ENCODE measurements at regions of chr19 and their contacts with region 1.

Region 1: GRCh38 chr19:43934985-43935708 is at the start of gene ZNF45:
- DNase-seq: peak; percentile 75 to 94 (median 82)
- ATAC-seq: peak; percentile 95
- H3K4me3 ChIP-seq: peak within 1 kb of the TSS; percentile 78
- H3K4me3 Mint-ChIP-seq: peak within 1 kb of the TSS; percentile 96
- H3K27ac ChIP-seq: peak within 1 kb of the TSS; percentile 56 to 64
- H3K27ac Mint-ChIP-seq: peak within 1 kb of the TSS; percentile 86
- H3K4me1 ChIP-seq: peaks cover 10% of the 10 kb centered on the region
- H3K4me1 Mint-ChIP-seq: peaks cover 25% of the 10 kb centered on the region
- H3K27me3 ChIP-seq: no peaks in the 10 kb centered on the region
- H3K27me3 Mint-ChIP-seq: no peaks in the 10 kb centered on the region
- CTCF ChIP-seq: no peak
- total RNA-seq, gene ZNF45: 4.0 to 4.6 TPM

Region 2: GRCh38 chr19:43754503-43755255 is 180.5 kb before region 1 on chr19 and contains the start of gene SMG9:
- CTCF ChIA-PET with region 1: no interaction called
- POLR2A ChIA-PET with region 1: no interaction called
- intact Hi-C with region 1: loop called in 1 of 2 experiments (anchors 5 kb)
- DNase-seq: peak; percentile 96 to 100 (median 98)
- ATAC-seq: peak; percentile 79
- H3K4me3 ChIP-seq: peak within 1 kb of the TSS; percentile 95
- H3K4me3 Mint-ChIP-seq: peak within 1 kb of the TSS; percentile 98
- H3K27ac ChIP-seq: peak within 1 kb of the TSS; percentile 97 to 99
- H3K27ac Mint-ChIP-seq: peak within 1 kb of the TSS; percentile 95
- H3K4me1 ChIP-seq: peaks cover 42% of the 10 kb centered on the region
- H3K4me1 Mint-ChIP-seq: peaks cover 43% of the 10 kb centered on the region
- H3K27me3 ChIP-seq: no peaks in the 10 kb centered on the region
- H3K27me3 Mint-ChIP-seq: no peaks in the 10 kb centered on the region
- CTCF ChIP-seq: no peak
- total RNA-seq, gene SMG9: 34.7 to 38.2 TPM

Region 3: GRCh38 chr19:43950834-43951645 is 15.9 kb after region 1 on chr19 and contains the start of gene ZNF221:
- CTCF ChIA-PET with region 1: no interaction called
- POLR2A ChIA-PET with region 1: interaction called, 12 read pairs
- intact Hi-C with region 1: loop called in 1 of 2 experiments (anchors 2 kb)
- DNase-seq: peak; percentile 9 to 86 (median 31)
- ATAC-seq: peak; percentile 51
- H3K4me3 ChIP-seq: peak within 1 kb of the TSS; percentile 84
- H3K4me3 Mint-ChIP-seq: peak within 1 kb of the TSS; percentile 95
- H3K27ac ChIP-seq: no peak within 1 kb of the TSS
- H3K27ac Mint-ChIP-seq: peak within 1 kb of the TSS; percentile 36
- H3K4me1 ChIP-seq: peaks cover 7% of the 10 kb centered on the region
- H3K4me1 Mint-ChIP-seq: peaks cover 15% of the 10 kb centered on the region
- H3K27me3 ChIP-seq: peaks cover 0 to 6% of the 10 kb centered on the region in 2 experiments
- H3K27me3 Mint-ChIP-seq: peaks cover 28% of the 10 kb centered on the region
- CTCF ChIP-seq: no peak
- total RNA-seq, gene ZNF221: 0.34 to 0.41 TPM

Region 4: GRCh38 chr19:44002566-44003460 is 67.7 kb after region 1 on chr19 and contains the start of gene ZNF230:
- CTCF ChIA-PET with region 1: no interaction called
- POLR2A ChIA-PET with region 1: interaction called, 8 read pairs
- intact Hi-C with region 1: loop called (anchors 5 to 10 kb)
- DNase-seq: peak; percentile 56 to 96 (median 75)
- ATAC-seq: peak; percentile 97
- H3K4me3 ChIP-seq: peak within 1 kb of the TSS; percentile 84
- H3K4me3 Mint-ChIP-seq: peak within 1 kb of the TSS; percentile 100
- H3K27ac ChIP-seq: peak within 1 kb of the TSS; percentile 39 to 53
- H3K27ac Mint-ChIP-seq: peak within 1 kb of the TSS; percentile 90
- H3K4me1 ChIP-seq: peaks cover 18% of the 10 kb centered on the region
- H3K4me1 Mint-ChIP-seq: peaks cover 29% of the 10 kb centered on the region
- H3K27me3 ChIP-seq: no peaks in the 10 kb centered on the region
- H3K27me3 Mint-ChIP-seq: no peaks in the 10 kb centered on the region
- CTCF ChIP-seq: no peak
- total RNA-seq, gene ZNF230: 2.2 to 2.8 TPM

Region 5: GRCh38 chr19:44164673-44165512 is 229.7 kb after region 1 on chr19 and contains the start of gene ZNF226:
- CTCF ChIA-PET with region 1: no interaction called
- POLR2A ChIA-PET with region 1: interaction called, 6 read pairs
- intact Hi-C with region 1: loop called in 1 of 2 experiments (anchors 10 kb)
- DNase-seq: peak; percentile 59 to 95 (median 71)
- ATAC-seq: peak; percentile 94
- H3K4me3 ChIP-seq: peak within 1 kb of the TSS; percentile 86
- H3K4me3 Mint-ChIP-seq: peak within 1 kb of the TSS; percentile 99
- H3K27ac ChIP-seq: peak within 1 kb of the TSS; percentile 72 to 88
- H3K27ac Mint-ChIP-seq: peak within 1 kb of the TSS; percentile 98
- H3K4me1 ChIP-seq: peaks cover 19% of the 10 kb centered on the region
- H3K4me1 Mint-ChIP-seq: peaks cover 32% of the 10 kb centered on the region
- H3K27me3 ChIP-seq: no peaks in the 10 kb centered on the region
- H3K27me3 Mint-ChIP-seq: no peaks in the 10 kb centered on the region
- CTCF ChIP-seq: no peak
- total RNA-seq, gene ZNF226: 7.9 to 9.1 TPM